AG04449 (cell line): ENCODE measurements at regions of chr3 and their contacts with region 1.

Region 1: DNA sequence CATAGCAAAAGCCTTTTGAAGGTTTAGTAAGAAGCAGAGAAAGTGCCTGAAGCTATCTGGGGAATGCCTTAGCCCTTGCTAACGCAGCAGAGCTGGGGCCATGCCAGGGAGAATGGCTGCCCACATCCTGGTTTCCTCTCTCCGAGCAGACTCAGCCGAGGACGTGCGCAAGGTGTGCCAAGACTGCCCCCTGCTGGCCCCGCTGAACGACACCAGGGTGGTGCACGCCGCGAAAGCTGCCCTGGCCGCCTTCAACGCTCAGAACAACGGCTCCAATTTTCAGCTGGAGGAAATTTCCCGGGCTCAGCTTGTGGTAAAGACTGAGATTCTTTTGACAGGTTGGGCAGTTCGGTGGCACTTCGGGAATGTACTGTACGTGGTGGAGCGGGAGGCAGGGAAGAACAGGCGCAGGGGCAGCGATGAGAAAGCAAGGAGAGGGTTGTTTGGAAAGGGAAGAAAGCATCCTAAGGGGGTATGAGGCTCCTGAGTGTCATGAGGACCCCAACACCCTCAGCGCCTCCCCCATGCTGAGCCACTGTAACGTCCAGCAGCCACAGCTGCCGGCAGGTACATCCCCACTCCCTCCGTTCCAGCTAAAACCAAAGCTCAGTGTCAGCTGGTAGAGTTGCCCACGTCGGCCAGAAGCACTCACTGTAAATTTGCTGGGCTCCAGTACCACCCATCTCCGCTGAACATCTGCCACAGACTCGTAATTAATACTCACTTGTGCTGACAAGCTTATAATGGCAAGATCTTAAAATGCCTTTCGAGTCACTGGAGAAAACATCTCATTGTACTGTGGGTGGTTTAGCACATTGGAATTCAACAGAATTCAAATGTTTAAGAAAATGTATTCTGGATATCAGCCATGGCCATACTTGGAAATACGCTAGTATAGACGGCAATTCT is 4.4 kb downstream of the AHSG start:
- DNase-seq: peak; percentile 93
- H3K4me3 ChIP-seq: peak overlapping the region; percentile 44
- CTCF ChIP-seq: peak; percentile 99

Region 2: DNA sequence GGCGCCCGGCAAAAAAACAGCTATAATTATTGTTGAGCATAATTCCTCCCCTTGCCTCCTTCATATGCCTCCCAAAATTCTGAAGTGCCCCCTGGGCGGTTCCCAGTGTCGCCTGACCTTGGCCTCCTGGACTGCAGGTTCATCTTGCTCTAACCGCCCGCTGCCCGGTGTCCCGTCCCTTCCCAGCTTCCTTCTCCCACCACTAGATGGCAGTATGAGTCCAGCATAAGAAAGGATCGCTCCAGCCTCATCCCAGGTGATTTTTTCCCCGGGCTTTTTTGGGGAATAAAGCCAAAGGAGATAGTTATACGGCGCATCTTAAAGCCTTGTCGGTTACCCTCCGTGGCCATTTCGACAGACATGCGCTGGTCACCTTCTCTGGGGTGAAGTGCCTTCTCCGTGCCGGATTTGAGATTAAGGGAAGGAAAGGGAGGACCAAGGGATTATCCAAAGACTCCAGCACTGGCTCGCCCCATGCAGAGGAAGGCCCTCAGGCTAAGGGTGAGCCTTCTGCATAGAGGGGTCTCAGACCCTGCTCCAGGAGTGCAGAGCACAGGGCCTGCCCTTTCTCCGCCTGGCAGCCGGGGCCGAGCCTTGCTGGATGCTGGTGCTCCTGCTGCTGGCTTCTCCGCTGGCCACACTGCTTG is 633.7 kb before region 1 on chr3:
- CTCF ChIA-PET with region 1: interaction called, 26 read pairs
- POLR2A ChIA-PET with region 1: no interaction called
- DNase-seq: no peak
- H3K4me3 ChIP-seq: no peak overlapping the region; the same call in 1 of the 2 replicates
- CTCF ChIP-seq: peak; percentile 79

Region 3: DNA sequence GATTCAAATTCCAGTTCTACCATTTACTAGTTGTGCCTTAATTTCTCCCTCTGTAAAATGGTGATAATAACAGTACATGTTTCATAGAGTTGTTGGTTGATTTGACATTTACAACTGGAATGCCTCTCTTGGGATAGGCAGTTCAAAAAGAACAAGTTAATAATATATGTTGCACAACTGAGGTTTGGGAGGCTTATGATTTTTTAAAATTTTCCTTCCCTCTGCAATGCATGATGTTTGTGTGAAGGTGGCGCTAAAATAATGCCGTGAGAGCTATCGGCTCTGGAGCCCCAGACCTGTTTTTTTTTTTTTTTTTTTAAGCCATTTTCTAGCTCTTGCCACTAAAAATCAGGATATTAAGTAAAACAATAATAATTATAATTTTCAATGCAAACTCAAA is 28.2 kb before region 1 on chr3:
- CTCF ChIA-PET with region 1: interaction called, 123 read pairs
- POLR2A ChIA-PET with region 1: no interaction called
- DNase-seq: no peak
- H3K4me3 ChIP-seq: no peak overlapping the region
- CTCF ChIP-seq: peak; percentile 7

Region 4: DNA sequence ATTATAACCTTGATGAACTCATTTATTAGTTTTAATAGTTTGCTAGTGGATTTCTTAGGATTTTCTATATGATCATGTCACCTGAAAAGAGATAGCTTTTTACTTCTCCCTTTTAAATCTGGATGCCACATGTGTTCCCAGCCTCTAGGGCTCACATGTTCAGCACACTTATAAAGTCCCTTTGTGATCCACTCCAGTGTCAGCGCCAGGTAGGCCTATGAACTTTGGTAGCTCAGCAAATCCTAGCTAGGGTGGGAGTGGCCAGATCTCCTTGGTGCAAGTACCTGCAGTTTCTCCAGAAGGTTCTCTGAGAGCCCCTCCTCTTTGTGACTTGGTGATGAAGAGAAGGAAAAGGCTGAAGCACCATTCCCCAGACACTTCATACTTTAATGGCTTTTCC is 31.6 kb after region 1 on chr3:
- CTCF ChIA-PET with region 1: interaction called, 11 read pairs
- POLR2A ChIA-PET with region 1: no interaction called
- DNase-seq: no peak
- H3K4me3 ChIP-seq: no peak overlapping the region
- CTCF ChIP-seq: no peak

Region 5: GRCh38 chr3:186806089-186807055 is 189.1 kb after region 1 on chr3 and contains the start of gene RFC4:
- CTCF ChIA-PET with region 1: interaction called, 31 read pairs
- POLR2A ChIA-PET with region 1: no interaction called
- DNase-seq: no peak
- H3K4me3 ChIP-seq: peak within 1 kb of the TSS; percentile 89
- CTCF ChIP-seq: no peak

Region 6: GRCh38 chr3:187031934-187032333 is 414.6 kb after region 1 on chr3:
- CTCF ChIA-PET with region 1: no interaction called
- POLR2A ChIA-PET with region 1: no interaction called
- DNase-seq: no peak
- H3K4me3 ChIP-seq: no peak overlapping the region
- CTCF ChIP-seq: no peak

Region 7: DNA sequence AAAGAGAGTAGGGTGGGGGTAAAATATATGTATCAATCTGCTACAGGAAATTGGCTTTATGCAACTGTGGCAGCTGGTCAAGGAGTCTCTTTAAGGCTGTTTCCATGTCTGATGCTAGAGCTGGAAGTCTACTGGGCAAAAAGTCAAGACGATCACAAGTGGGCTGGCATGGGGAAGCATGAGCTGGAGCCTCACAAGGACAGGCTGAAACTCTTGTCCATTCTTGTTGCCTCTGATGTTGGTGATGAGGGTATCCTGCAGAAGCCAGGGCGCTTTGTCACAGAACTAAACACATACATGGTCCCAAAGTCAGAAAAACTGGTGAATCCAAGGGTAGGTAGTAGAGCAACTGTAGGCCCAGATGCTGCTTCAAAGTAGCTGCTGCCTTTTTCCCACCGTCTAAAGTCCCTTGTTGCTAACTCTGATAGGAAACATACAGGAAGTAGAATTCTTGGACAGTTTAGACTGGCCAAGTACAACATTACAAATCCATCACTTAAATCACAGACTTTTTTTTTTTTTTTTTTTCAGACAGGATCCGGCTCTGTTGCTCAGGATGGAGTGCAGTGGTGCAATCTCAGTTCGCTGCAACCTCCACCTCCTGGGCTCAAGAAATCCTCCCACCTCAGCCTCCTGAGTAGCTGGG is 467.9 kb after region 1 on chr3:
- CTCF ChIA-PET with region 1: no interaction called
- POLR2A ChIA-PET with region 1: no interaction called
- DNase-seq: no peak
- H3K4me3 ChIP-seq: no peak overlapping the region
- CTCF ChIP-seq: no peak

Region 8: GRCh38 chr3:187164885-187165543 is 547.7 kb after region 1 on chr3:
- CTCF ChIA-PET with region 1: interaction called, 27 read pairs
- POLR2A ChIA-PET with region 1: no interaction called
- DNase-seq: no peak
- H3K4me3 ChIP-seq: no peak overlapping the region
- CTCF ChIP-seq: peak; percentile 49